ENCODE measurements at regions of chr21 and their contacts with region 1.

Region 1: GRCh38 chr21:43646550-43647260 is 12.6 kb downstream of the HSF2BP start:
- DNase-seq: peak; percentile 93
- H3K4me3 ChIP-seq: no peak overlapping the region
- H3K27ac ChIP-seq: peak overlapping the region; percentile 22; the same call in 1 of the 2 replicates
- H3K4me1 ChIP-seq: peaks cover 23% of the 10 kb centered on the region
- H3K27me3 ChIP-seq: no peaks in the 10 kb centered on the region

Region 2: GRCh38 chr21:43318841-43319781 is 327.6 kb before region 1 on chr21:
- in situ Hi-C with region 1: loop called (anchors 10 kb)
- DNase-seq: peak; percentile 88
- H3K4me3 ChIP-seq: peak overlapping the region; percentile 39
- H3K27ac ChIP-seq: 0 out of 2 replicates have a peak overlapping the region, but pooled peaks have one; percentile 7
- H3K4me1 ChIP-seq: peaks cover 6% of the 10 kb centered on the region
- H3K27me3 ChIP-seq: no peaks in the 10 kb centered on the region

Measured in GM23248 (cell line).